ENCODE measurements at regions of chr4 and their contacts with region 1.

Region 1: GRCh38 chr4:99763635-99764101 is 53.0 kb upstream of the DAPP1 start:
- DNase-seq: peak; percentile 58
- H3K4me3 ChIP-seq: no peak overlapping the region
- H3K27ac ChIP-seq: no peak overlapping the region
- H3K4me1 ChIP-seq: no peaks in the 10 kb centered on the region
- H3K27me3 ChIP-seq: no peaks in the 10 kb centered on the region
- CTCF ChIP-seq: no peak

Region 2: GRCh38 chr4:99722662-99723200 is 40.9 kb before region 1 on chr4:
- CTCF ChIA-PET with region 1: no interaction called
- POLR2A ChIA-PET with region 1: no interaction called
- intact Hi-C with region 1: loop called (anchors 1 kb)
- DNase-seq: no peak
- H3K4me3 ChIP-seq: no peak overlapping the region
- H3K27ac ChIP-seq: no peak overlapping the region
- H3K4me1 ChIP-seq: peaks cover 4% of the 10 kb centered on the region
- H3K27me3 ChIP-seq: no peaks in the 10 kb centered on the region
- CTCF ChIP-seq: no peak